ENCODE measurements at regions of chr7 and their contacts with region 1.

Region 1: GRCh38 chr7:92833024-92833765 is 3.2 kb downstream of the CDK6 start:
- DNase-seq: peak; percentile 91
- H3K4me3 ChIP-seq: peak overlapping the region; percentile 55 to 84 (median 80)
- H3K27ac ChIP-seq: peak overlapping the region; percentile 79 to 97 (median 93)
- H3K4me1 ChIP-seq: peaks cover 0 to 40% (median 27%) of the 10 kb centered on the region in 4 donors
- H3K27me3 ChIP-seq: no peaks in the 10 kb centered on the region
- CTCF ChIP-seq: peak; percentile 65 to 89 (median 82)
- EP300 ChIP-seq: no peak
- POLR2A ChIP-seq: no peak

Region 2: DNA sequence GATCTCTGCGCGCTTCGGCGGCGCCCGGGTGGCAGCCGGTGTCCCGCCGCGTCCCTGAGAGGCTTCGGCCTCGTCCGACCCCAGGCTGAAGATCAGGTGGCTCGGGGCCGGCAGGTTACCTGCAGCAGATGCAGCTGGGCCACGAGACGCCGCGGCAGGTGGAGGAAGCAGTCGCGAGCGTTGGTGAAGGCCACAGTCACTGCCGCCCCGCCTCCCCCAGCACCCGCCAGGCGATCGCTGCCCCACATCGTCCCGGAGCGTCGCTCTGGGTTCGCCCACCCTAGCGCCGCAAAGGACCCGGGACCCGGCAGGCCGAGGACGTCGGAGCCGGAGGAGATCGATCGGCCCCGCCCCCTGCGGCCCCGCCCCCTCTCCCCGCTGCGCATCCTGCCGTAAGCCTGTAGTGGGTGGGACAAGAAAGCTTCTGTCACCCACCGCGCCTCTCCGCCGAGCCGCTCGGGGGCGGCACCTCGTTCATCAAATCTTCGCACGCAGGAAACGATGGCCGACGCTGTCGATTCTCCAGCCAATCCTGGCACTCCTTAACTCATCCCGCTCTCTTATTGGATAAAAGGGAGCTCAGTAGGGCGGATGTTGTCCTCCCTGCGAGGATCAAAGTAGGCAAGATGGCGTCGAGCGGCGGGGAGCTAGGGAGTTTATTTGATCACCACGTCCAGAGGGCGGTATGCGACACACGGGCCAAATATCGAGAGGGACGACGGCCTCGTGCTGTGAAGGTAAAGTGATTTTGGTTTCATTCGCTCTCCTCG is 304.8 kb before region 1 on chr7 and contains the starts of genes PEX1 and RBM48:
- intact Hi-C with region 1: loop called (anchors 5 kb)
- DNase-seq: peak; percentile 98
- H3K4me3 ChIP-seq: peak within 1 kb of the TSS; percentile 83 to 97 (median 95)
- H3K27ac ChIP-seq: peak within 1 kb of the TSS; percentile 86 to 90 (median 88)
- H3K4me1 ChIP-seq: peaks cover 0 to 22% (median 20%) of the 10 kb centered on the region in 4 donors
- H3K27me3 ChIP-seq: no peaks in the 10 kb centered on the region
- CTCF ChIP-seq: peak in 1 of 4 experiments; percentile 19
- EP300 ChIP-seq: no peak
- POLR2A ChIP-seq: no peak
- total RNA-seq, gene PEX1: 19.0 to 29.0 (median 24.4) TPM
- total RNA-seq, gene RBM48: 6.7 to 20.4 (median 14.5) TPM

Region 3: GRCh38 chr7:92621026-92621540 is 212.1 kb before region 1 on chr7:
- intact Hi-C with region 1: loop called (anchors 2 kb)
- DNase-seq: peak; percentile 73
- H3K4me3 ChIP-seq: no peak overlapping the region
- H3K27ac ChIP-seq: peak overlapping the region; percentile 16 to 58 (median 50)
- H3K4me1 ChIP-seq: peaks cover 0 to 13% (median 10%) of the 10 kb centered on the region in 4 donors
- H3K27me3 ChIP-seq: no peaks in the 10 kb centered on the region
- CTCF ChIP-seq: peak; percentile 55 to 71 (median 63)
- EP300 ChIP-seq: no peak
- POLR2A ChIP-seq: no peak

Region 4: DNA sequence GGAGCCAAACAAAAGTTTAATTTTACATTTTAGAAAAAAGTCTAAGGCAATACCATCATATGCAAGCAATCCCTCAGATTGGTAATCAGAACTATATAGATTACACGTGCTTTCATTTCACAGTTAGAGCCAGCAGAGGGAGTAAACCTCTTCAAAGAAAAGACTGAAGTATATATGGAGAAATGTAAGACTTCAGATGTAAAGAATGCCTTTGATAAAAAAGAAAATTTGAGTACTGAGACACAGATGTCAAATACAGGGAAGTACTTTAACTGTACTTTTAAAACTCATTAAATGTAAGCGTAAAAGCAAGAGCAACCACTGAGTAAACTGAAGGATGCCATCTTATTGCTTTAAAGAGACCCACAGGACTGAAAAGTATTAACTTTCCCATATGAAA is 141.6 kb before region 1 on chr7:
- intact Hi-C with region 1: loop called (anchors 1 kb)
- DNase-seq: no peak
- H3K4me3 ChIP-seq: no peak overlapping the region
- H3K27ac ChIP-seq: no peak overlapping the region
- H3K4me1 ChIP-seq: peaks cover 0 to 16% (median 3%) of the 10 kb centered on the region in 4 donors
- H3K27me3 ChIP-seq: no peaks in the 10 kb centered on the region
- CTCF ChIP-seq: peak in 3 of 4 experiments; percentile 48 to 55 (median 52)
- EP300 ChIP-seq: no peak
- POLR2A ChIP-seq: no peak

Region 5: DNA sequence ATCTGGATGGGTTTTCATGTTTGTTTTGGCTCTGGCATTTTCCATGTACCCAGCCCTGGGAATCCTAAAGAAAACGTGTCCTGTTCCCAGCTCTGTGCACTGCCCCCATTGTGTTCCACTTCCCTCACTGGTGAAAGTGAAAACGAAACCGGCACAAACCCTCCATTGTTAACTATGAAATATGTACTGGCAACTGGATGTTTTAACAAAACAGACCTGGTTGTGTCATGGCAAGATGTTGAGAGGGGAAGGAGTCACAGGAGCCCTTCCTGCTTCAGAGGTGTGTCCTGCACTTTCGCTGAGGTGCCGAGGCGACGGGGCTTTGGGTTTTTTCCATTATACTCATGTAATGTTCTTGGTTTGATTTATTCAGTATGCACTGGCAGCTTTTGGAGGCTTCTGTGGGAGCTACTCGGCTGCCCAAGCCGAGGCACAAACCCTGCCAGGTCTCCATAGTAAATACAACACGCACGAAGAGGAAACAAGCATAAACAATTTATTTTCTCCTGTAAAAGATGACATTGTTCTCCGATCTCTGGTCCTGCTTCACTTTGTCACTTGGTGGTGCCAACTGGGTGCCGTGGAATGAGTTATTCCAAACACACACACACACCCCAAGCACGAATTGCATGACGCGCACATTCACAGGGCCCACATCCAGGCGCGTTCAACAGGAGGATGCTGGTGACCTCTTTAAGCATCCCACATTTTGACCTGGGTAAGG is 115.0 kb before region 1 on chr7:
- intact Hi-C with region 1: loop called (anchors 1 kb)
- DNase-seq: peak; percentile 79
- H3K4me3 ChIP-seq: peak overlapping the region; percentile 35 to 55 (median 50)
- H3K27ac ChIP-seq: peak overlapping the region; percentile 81 to 89 (median 88)
- H3K4me1 ChIP-seq: peaks cover 0 to 39% (median 34%) of the 10 kb centered on the region in 4 donors
- H3K27me3 ChIP-seq: no peaks in the 10 kb centered on the region
- CTCF ChIP-seq: no peak
- EP300 ChIP-seq: no peak
- POLR2A ChIP-seq: peak in 1 of 2 donors; percentile 15

Region 6: GRCh38 chr7:93055543-93056107 is 222.4 kb after region 1 on chr7:
- intact Hi-C with region 1: loop called (anchors 5 kb)
- DNase-seq: no peak
- H3K4me3 ChIP-seq: no peak overlapping the region
- H3K27ac ChIP-seq: no peak overlapping the region
- H3K4me1 ChIP-seq: no peaks in the 10 kb centered on the region
- H3K27me3 ChIP-seq: no peaks in the 10 kb centered on the region
- CTCF ChIP-seq: peak; percentile 53 to 69 (median 59)
- EP300 ChIP-seq: no peak
- POLR2A ChIP-seq: no peak